Aorta (tissue), 5 donors: ENCODE measurements at regions of chr12 and their contacts with region 1.

Region 1: DNA sequence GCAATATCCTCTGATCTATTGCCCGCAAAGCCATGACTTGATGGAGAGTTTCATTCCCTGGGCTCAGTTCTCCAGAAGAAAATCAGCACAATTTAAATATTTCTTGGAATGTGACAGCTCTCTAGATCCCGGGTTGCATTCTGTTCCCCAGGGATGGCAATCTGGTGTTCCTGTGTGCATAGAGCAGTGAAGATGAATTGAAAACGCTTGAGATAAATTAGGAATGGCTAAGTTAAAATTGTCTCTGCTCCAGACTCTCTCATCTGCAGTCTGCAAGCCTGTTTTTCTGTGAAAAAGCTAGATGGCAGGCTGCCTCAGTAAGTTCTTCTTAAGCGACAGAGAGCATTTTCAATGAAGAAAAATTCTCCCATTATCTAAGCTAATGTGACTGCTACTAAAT is 582.5 kb upstream of the MGAT4C start:
- DNase-seq: no peak
- ATAC-seq: peak; percentile 19
- H3K4me3 ChIP-seq: no peak overlapping the region
- H3K27ac ChIP-seq: no peak overlapping the region
- H3K4me1 ChIP-seq: no peaks in the 10 kb centered on the region
- H3K27me3 ChIP-seq: no peaks in the 10 kb centered on the region

Region 2: GRCh38 chr12:86597431-86597830 is 241.3 kb before region 1 on chr12:
- intact Hi-C with region 1: no loop called
- DNase-seq: no peak
- ATAC-seq: no peak
- H3K4me3 ChIP-seq: no peak overlapping the region
- H3K27ac ChIP-seq: no peak overlapping the region
- H3K4me1 ChIP-seq: no peaks in the 10 kb centered on the region
- H3K27me3 ChIP-seq: no peaks in the 10 kb centered on the region

Region 3: GRCh38 chr12:86710110-86710509 is 128.6 kb before region 1 on chr12:
- intact Hi-C with region 1: no loop called
- DNase-seq: no peak
- ATAC-seq: no peak
- H3K4me3 ChIP-seq: no peak overlapping the region
- H3K27ac ChIP-seq: no peak overlapping the region
- H3K4me1 ChIP-seq: no peaks in the 10 kb centered on the region
- H3K27me3 ChIP-seq: no peaks in the 10 kb centered on the region

Region 4: GRCh38 chr12:86860776-86861175 is 22.1 kb after region 1 on chr12:
- intact Hi-C with region 1: loop called in 1 of 2 experiments (anchors 2 kb)
- DNase-seq: no peak
- ATAC-seq: no peak
- H3K4me3 ChIP-seq: no peak overlapping the region
- H3K27ac ChIP-seq: no peak overlapping the region
- H3K4me1 ChIP-seq: no peaks in the 10 kb centered on the region
- H3K27me3 ChIP-seq: no peaks in the 10 kb centered on the region

Region 5: DNA sequence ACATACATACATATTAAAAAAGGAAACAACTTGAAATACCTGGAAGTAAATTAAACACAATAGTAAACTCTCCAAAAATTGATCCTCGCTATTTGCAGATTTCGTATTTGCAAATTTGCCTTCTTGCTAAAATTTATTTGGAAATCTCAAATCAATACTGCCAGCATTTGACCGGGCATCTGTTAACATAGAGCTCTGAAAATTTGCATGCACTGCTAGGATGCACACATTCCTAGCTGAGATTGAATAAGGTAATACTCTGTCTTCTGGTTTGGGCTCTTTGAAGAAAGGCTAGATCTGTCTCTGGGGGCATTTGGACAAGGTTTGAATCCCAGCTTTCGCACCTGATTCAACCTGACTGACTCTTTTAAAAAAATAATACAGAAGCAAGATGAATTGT is 146.6 kb after region 1 on chr12:
- intact Hi-C with region 1: no loop called
- DNase-seq: no peak
- ATAC-seq: no peak
- H3K4me3 ChIP-seq: no peak overlapping the region
- H3K27ac ChIP-seq: no peak overlapping the region
- H3K4me1 ChIP-seq: no peaks in the 10 kb centered on the region
- H3K27me3 ChIP-seq: no peaks in the 10 kb centered on the region